Calu3 (cell line): ENCODE measurements at regions of chr12 and their contacts with region 1.

Region 1: DNA sequence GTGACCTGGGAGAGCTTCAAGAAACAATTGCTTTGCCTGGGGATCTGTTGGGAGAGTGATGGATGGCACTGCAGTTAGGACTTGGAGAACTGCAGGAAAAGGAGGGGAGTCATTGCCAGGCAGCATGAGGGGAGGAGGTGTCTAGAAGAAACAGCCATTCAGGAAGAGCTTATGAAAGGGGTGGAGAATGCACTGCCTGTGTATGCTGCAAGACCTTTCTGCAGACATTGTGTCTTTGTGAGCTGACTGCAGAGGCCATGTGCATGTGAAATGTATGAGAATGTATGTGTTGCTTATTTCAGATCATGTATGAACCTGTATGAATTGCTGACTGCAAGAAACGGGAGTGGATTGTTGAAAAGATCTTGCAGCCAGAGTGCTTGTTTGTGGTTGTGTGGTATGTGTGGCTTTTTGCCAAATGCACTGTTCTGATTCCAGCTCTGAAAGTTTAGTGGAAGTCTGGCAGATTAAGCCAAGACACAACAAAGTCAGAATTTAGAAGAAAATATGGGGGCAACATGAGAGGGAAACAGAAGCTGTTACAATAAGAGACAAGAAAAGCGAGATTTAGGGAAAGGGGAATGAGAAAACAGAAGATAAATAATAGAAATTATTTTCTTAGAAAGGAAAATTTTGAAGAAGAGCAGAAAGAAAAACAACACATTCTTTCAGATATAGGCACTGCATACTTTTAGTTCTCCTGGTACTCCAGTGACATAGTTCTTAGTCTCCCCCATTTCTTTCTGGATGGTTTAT is 9.8 kb upstream of the RIMKLB start:
- DNase-seq: peak; percentile 44
- H3K4me3 Mint-ChIP-seq: no peak overlapping the region
- H3K27ac Mint-ChIP-seq: no peak overlapping the region
- H3K4me1 Mint-ChIP-seq: no peaks in the 10 kb centered on the region
- H3K27me3 Mint-ChIP-seq: no peaks in the 10 kb centered on the region
- CTCF ChIP-seq: no peak

Region 2: GRCh38 chr12:8554451-8555195 is 133.4 kb before region 1 on chr12:
- CTCF ChIA-PET with region 1: no interaction called
- intact Hi-C with region 1: no loop called
- DNase-seq: peak; percentile 14
- H3K4me3 Mint-ChIP-seq: no peak overlapping the region
- H3K27ac Mint-ChIP-seq: no peak overlapping the region
- H3K4me1 Mint-ChIP-seq: no peaks in the 10 kb centered on the region
- H3K27me3 Mint-ChIP-seq: no peaks in the 10 kb centered on the region
- CTCF ChIP-seq: no peak

Region 3: DNA sequence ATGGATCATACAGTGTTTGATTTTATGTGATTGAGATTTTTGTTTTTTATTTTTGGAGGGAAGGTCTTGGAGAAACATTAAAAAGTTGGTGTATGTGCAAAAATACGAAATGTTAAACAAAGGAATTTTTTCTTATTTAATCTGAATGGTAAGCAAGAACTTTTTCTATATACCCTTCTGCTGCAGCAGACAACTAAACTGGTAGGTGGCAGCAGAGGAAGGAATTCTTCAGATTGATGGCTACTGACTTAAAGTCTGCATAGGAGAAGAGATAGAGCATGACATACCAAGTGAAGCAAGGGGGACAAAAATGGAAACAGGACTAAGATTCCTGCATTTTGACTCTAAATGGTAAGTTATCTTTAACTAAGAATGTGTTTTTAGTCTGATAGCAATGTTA is 92.4 kb after region 1 on chr12:
- CTCF ChIA-PET with region 1: no interaction called
- intact Hi-C with region 1: loop called (anchors 2 kb)
- DNase-seq: peak; percentile 10
- H3K4me3 Mint-ChIP-seq: no peak overlapping the region
- H3K27ac Mint-ChIP-seq: no peak overlapping the region
- H3K4me1 Mint-ChIP-seq: no peaks in the 10 kb centered on the region
- H3K27me3 Mint-ChIP-seq: no peaks in the 10 kb centered on the region
- CTCF ChIP-seq: no peak

Region 4: GRCh38 chr12:8823565-8824300 is 135.7 kb after region 1 on chr12:
- CTCF ChIA-PET with region 1: no interaction called
- intact Hi-C with region 1: loop called (anchors 2 kb)
- DNase-seq: peak; percentile 11
- H3K4me3 Mint-ChIP-seq: no peak overlapping the region
- H3K27ac Mint-ChIP-seq: no peak overlapping the region
- H3K4me1 Mint-ChIP-seq: peaks cover 13% of the 10 kb centered on the region
- H3K27me3 Mint-ChIP-seq: no peaks in the 10 kb centered on the region
- CTCF ChIP-seq: no peak

Region 5: GRCh38 chr12:9256341-9256740 is 568.3 kb after region 1 on chr12:
- CTCF ChIA-PET with region 1: interaction called, 12 read pairs
- intact Hi-C with region 1: no loop called
- DNase-seq: no peak
- H3K4me3 Mint-ChIP-seq: no peak overlapping the region
- H3K27ac Mint-ChIP-seq: no peak overlapping the region
- H3K4me1 Mint-ChIP-seq: no peaks in the 10 kb centered on the region
- H3K27me3 Mint-ChIP-seq: peaks cover 25% of the 10 kb centered on the region
- CTCF ChIP-seq: no peak